ENCODE measurements at regions of chr7 and their contacts with region 1.

Region 1: GRCh38 chr7:158407581-158408317 is 179.9 kb downstream of the PTPRN2 start:
- DNase-seq: no peak
- ATAC-seq: no peak
- H3K4me3 Mint-ChIP-seq: no peak overlapping the region
- H3K27ac Mint-ChIP-seq: no peak overlapping the region
- H3K4me1 Mint-ChIP-seq: no peaks in the 10 kb centered on the region
- H3K27me3 Mint-ChIP-seq: no peaks in the 10 kb centered on the region
- CTCF ChIP-seq: no peak

Region 2: DNA sequence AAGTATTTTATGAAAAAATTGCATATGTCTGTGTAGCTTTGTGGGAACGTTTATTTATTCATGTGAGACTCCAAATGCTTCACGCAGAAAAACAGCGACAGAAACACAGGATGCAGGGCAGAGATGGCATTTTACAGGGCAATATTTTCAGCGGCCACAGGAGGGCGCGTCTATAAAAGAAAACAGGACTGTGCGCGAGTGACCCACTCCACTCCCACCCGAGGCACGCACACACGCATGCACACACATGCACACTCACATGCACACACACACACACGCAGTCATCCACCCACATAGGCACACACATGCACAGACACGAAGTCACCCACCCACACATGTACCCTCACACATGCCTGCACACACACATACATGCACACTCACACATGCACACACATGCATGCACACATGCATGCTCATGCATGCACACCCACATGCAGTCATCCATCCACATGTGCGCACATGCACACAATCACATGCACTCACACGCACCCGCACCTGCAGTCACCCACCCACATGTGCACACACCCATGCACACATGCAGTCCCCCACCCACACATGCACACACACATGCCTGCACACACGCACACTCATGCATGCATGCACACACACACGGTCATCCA is 974.7 kb before region 1 on chr7:
- CTCF ChIA-PET with region 1: no interaction called
- POLR2A ChIA-PET with region 1: no interaction called
- intact Hi-C with region 1: loop called (anchors 5 kb)
- DNase-seq: no peak
- ATAC-seq: no peak
- H3K4me3 Mint-ChIP-seq: peak overlapping the region; percentile 47
- H3K27ac Mint-ChIP-seq: no peak overlapping the region
- H3K4me1 Mint-ChIP-seq: peaks cover 15% of the 10 kb centered on the region
- H3K27me3 Mint-ChIP-seq: no peaks in the 10 kb centered on the region
- CTCF ChIP-seq: no peak

Region 3: GRCh38 chr7:157807510-157807909 is 600.2 kb before region 1 on chr7:
- CTCF ChIA-PET with region 1: no interaction called
- POLR2A ChIA-PET with region 1: no interaction called
- intact Hi-C with region 1: no loop called
- DNase-seq: no peak
- ATAC-seq: no peak
- H3K4me3 Mint-ChIP-seq: no peak overlapping the region
- H3K27ac Mint-ChIP-seq: no peak overlapping the region
- H3K4me1 Mint-ChIP-seq: no peaks in the 10 kb centered on the region
- H3K27me3 Mint-ChIP-seq: no peaks in the 10 kb centered on the region
- CTCF ChIP-seq: no peak

Measured in activated B cell treated with CpG ODN at 0.5 μM for 24 hours (primary cell).